ENCODE measurements at regions of chr9 and their contacts with region 1.

Region 1: GRCh38 chr9:93111371-93112115 is 15.5 kb downstream of the CARD19 start:
- DNase-seq: no peak
- CTCF ChIP-seq: no peak

Region 2: GRCh38 chr9:93003552-93004407 is 107.8 kb before region 1 on chr9:
- CTCF ChIA-PET with region 1: interaction called, 16 read pairs
- POLR2A ChIA-PET with region 1: no interaction called
- DNase-seq: peak; percentile 82
- CTCF ChIP-seq: peak; percentile 59

Region 3: GRCh38 chr9:93095205-93096130 is 16.1 kb before region 1 on chr9:
- CTCF ChIA-PET with region 1: interaction called, 51 read pairs
- POLR2A ChIA-PET with region 1: no interaction called
- DNase-seq: peak; percentile 100
- CTCF ChIP-seq: no peak

Region 4: DNA sequence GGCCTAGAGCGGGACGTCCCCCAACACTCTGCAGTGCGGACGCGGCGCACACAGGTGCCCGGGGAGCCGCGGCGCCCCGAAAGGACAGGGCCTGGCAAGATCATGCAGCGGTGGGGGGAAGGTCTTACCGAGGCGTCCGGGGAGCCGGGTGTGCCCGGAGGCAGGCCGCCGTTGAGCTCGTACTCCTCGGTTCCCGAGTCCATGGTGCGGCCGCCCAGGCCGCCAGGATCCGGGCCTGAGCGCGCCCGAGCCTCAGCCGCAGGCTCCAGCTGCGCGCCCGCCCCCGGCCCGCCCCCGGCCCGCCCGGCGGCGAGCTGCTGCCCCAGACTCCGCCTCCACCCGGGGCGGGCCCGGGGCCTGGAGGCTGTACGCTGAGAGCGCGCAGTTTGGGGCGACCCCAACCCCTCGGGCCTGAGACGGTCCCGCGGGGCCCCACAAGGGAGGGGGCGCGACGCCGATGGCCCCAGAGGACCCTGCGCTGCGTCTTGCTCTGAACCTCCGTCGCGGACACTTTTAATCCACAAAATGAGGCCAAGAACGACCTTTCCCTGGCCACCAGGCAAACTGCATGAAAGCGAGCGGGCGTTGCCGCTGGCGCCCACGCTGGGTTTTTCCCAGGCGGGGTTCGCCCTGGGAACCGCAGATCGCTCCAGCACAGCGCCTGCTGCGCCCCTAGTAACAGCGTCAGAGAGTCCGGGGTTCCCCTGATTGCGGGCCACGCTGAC is 22.6 kb after region 1 on chr9 and contains the start of gene NINJ1:
- CTCF ChIA-PET with region 1: interaction called, 174 read pairs
- POLR2A ChIA-PET with region 1: interaction called, 3 read pairs
- DNase-seq: peak; percentile 93
- CTCF ChIP-seq: no peak

Region 5: GRCh38 chr9:93262537-93263242 is 151.1 kb after region 1 on chr9:
- CTCF ChIA-PET with region 1: no interaction called
- POLR2A ChIA-PET with region 1: no interaction called
- DNase-seq: peak; percentile 14
- CTCF ChIP-seq: no peak

Region 6: GRCh38 chr9:93302551-93303257 is 191.2 kb after region 1 on chr9:
- CTCF ChIA-PET with region 1: interaction called, 13 read pairs
- POLR2A ChIA-PET with region 1: no interaction called
- DNase-seq: peak; percentile 74
- CTCF ChIP-seq: peak; percentile 51